ENCODE measurements at regions of chr22 and their contacts with region 1.

Region 1: GRCh38 chr22:37862570-37863325 is 13.5 kb downstream of the EIF3L start:
- DNase-seq: no peak
- ATAC-seq: no peak
- H3K4me3 ChIP-seq: no peak overlapping the region
- H3K4me3 Mint-ChIP-seq: no peak overlapping the region
- H3K27ac ChIP-seq: no peak overlapping the region
- H3K27ac Mint-ChIP-seq: no peak overlapping the region
- H3K4me1 ChIP-seq: no peaks in the 10 kb centered on the region
- H3K4me1 Mint-ChIP-seq: no peaks in the 10 kb centered on the region
- H3K27me3 ChIP-seq: no peaks in the 10 kb centered on the region
- H3K27me3 Mint-ChIP-seq: no peaks in the 10 kb centered on the region
- CTCF ChIP-seq: no peak

Region 2: GRCh38 chr22:37643225-37643847 is 219.4 kb before region 1 on chr22:
- CTCF ChIA-PET with region 1: interaction called, 10 read pairs
- POLR2A ChIA-PET with region 1: no interaction called
- intact Hi-C with region 1: no loop called
- DNase-seq: peak; percentile 86
- ATAC-seq: peak; percentile 75
- H3K4me3 ChIP-seq: no peak overlapping the region
- H3K4me3 Mint-ChIP-seq: peak overlapping the region; percentile 56
- H3K27ac ChIP-seq: no peak overlapping the region
- H3K27ac Mint-ChIP-seq: peak overlapping the region; percentile 87
- H3K4me1 ChIP-seq: peaks cover 24 to 39% of the 10 kb centered on the region in 2 donors
- H3K4me1 Mint-ChIP-seq: peaks cover 35% of the 10 kb centered on the region
- H3K27me3 ChIP-seq: no peaks in the 10 kb centered on the region
- H3K27me3 Mint-ChIP-seq: no peaks in the 10 kb centered on the region
- CTCF ChIP-seq: peak; percentile 91

Region 3: DNA sequence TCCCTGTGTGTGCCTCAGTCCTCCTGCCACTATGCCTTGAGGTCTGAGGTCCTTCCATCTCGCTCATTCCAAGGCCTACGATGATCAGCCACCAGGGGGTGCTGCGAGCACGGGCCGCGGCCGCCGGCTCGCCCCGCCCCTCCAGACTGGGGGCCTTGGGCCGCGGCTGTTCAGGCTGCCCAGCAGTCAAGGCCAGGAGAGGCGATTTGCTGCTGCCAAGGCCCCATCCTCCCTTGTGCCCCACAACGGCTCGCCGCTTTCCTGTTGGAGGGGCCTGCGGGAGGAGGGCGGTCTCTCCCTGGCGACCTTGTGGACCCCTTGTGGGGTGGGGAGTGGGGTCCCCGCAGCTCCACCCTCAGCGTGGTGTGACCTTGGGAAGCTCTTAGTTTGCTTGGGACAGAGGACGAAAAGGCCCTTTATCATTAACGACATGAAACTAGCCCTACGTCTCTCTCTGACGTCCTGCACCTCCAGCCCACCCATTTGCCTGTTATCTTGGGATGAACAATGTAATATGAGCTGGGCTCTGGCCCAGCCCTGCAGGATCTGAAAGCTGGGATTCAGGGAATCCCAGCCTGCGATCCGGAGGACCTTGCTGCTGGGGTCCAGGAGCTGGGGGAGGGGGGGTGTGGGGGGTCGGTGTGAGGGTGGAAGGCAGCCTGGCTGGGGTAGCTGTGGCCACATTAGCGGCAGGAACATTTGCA is 44.9 kb before region 1 on chr22:
- CTCF ChIA-PET with region 1: interaction called, 177 read pairs
- POLR2A ChIA-PET with region 1: interaction called, 3 read pairs
- intact Hi-C with region 1: loop called (anchors 1 kb)
- DNase-seq: peak; percentile 86
- ATAC-seq: peak; percentile 90
- H3K4me3 ChIP-seq: peak overlapping the region in 4 of 5 experiments; percentile 29 to 51 (median 40)
- H3K4me3 Mint-ChIP-seq: peak overlapping the region; percentile 82
- H3K27ac ChIP-seq: no peak overlapping the region
- H3K27ac Mint-ChIP-seq: no peak overlapping the region
- H3K4me1 ChIP-seq: peaks cover 19 to 20% of the 10 kb centered on the region in 2 donors
- H3K4me1 Mint-ChIP-seq: peaks cover 10% of the 10 kb centered on the region
- H3K27me3 ChIP-seq: peaks cover 0 to 44% (median 9%) of the 10 kb centered on the region in 4 experiments
- H3K27me3 Mint-ChIP-seq: peaks cover 19% of the 10 kb centered on the region
- CTCF ChIP-seq: peak; percentile 90

Region 4: DNA sequence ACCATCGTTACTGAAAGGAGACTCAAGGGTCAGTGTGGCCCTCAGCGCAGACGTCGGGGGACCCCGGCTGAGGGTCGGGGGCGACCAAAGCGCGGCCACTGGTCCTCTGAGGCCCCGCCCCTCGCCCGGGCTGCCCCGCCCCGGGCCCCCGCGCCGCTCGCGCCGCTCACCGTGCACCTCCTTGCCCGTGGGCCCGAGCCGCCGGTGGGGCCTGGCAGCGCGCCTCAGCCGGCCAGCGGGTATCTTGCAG is 19.1 kb before region 1 on chr22:
- CTCF ChIA-PET with region 1: interaction called, 12 read pairs
- POLR2A ChIA-PET with region 1: no interaction called
- intact Hi-C with region 1: loop called (anchors 2 kb)
- DNase-seq: no peak
- ATAC-seq: peak; percentile 35
- H3K4me3 ChIP-seq: peak overlapping the region; percentile 46 to 78 (median 65)
- H3K4me3 Mint-ChIP-seq: peak overlapping the region; percentile 91
- H3K27ac ChIP-seq: peak overlapping the region in 1 of 2 donors; percentile 76
- H3K27ac Mint-ChIP-seq: peak overlapping the region; percentile 87
- H3K4me1 ChIP-seq: peaks cover 11 to 25% of the 10 kb centered on the region in 2 donors
- H3K4me1 Mint-ChIP-seq: peaks cover 16% of the 10 kb centered on the region
- H3K27me3 ChIP-seq: no peaks in the 10 kb centered on the region
- H3K27me3 Mint-ChIP-seq: no peaks in the 10 kb centered on the region
- CTCF ChIP-seq: no peak

Region 5: GRCh38 chr22:37896181-37896592 is 33.4 kb after region 1 on chr22:
- CTCF ChIA-PET with region 1: interaction called, 10 read pairs
- POLR2A ChIA-PET with region 1: no interaction called
- intact Hi-C with region 1: no loop called
- DNase-seq: peak; percentile 68
- ATAC-seq: peak; percentile 82
- H3K4me3 ChIP-seq: peak overlapping the region in 2 of 5 experiments; percentile 21 to 37
- H3K4me3 Mint-ChIP-seq: peak overlapping the region; percentile 30
- H3K27ac ChIP-seq: peak overlapping the region; percentile 76 to 83
- H3K27ac Mint-ChIP-seq: peak overlapping the region; percentile 91
- H3K4me1 ChIP-seq: peaks cover 11 to 19% of the 10 kb centered on the region in 2 donors
- H3K4me1 Mint-ChIP-seq: peaks cover 10% of the 10 kb centered on the region
- H3K27me3 ChIP-seq: no peaks in the 10 kb centered on the region
- H3K27me3 Mint-ChIP-seq: no peaks in the 10 kb centered on the region
- CTCF ChIP-seq: no peak